Naive thymus-derived CD4-positive, alpha-beta T cell (primary cell): ENCODE measurements at regions of chr7 and their contacts with region 1.

Region 1: DNA sequence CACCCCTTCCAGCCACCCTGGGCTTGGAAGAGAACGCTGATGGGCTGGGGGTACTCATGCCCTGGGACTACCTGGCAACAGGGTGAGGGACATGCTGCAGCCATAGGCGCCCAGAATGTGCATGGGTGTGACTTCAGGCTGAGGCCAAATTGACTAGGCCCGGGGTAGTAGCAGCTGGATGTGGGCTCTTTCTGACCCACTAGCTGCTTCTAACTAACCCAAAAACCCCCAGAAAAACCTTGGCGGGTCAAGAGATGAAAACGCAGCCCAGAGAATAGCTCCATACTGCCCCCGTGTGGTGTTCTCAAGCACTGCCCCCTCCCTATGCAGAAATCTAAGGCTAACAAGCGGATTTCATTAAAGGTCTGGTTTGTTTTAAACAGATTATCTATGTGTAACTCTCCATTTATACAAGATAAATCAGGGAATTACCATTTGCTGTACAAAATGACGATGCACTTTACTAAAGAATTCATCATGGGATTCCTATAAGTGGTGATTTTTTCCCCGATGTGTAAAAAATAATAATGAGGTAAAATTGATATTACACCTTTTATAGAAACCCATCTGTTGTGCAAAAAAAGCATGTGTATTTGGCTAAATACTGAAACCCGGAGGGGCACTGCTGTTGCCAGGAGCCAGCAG is 4.2 kb downstream of the SMARCD3 start:
- DNase-seq: peak in 6 of 9 donors; percentile 44 to 63 (median 54)
- ATAC-seq: peak; percentile 52
- H3K4me3 ChIP-seq: peak overlapping the region; percentile 40
- H3K4me3 Mint-ChIP-seq: peak overlapping the region; percentile 71 to 93 (median 78)
- H3K27ac ChIP-seq: no peak overlapping the region
- H3K27ac Mint-ChIP-seq: peak overlapping the region in 6 of 9 donors; percentile 9 to 90 (median 68)
- H3K4me1 ChIP-seq: peaks cover 22 to 36% of the 10 kb centered on the region in 2 donors
- H3K4me1 Mint-ChIP-seq: peaks cover 27 to 53% (median 38%) of the 10 kb centered on the region in 7 donors
- H3K27me3 ChIP-seq: peaks cover 0 to under 1% of the 10 kb centered on the region in 2 donors
- H3K27me3 Mint-ChIP-seq: peaks cover 3 to 37% (median 21%) of the 10 kb centered on the region in 5 donors

Region 2: DNA sequence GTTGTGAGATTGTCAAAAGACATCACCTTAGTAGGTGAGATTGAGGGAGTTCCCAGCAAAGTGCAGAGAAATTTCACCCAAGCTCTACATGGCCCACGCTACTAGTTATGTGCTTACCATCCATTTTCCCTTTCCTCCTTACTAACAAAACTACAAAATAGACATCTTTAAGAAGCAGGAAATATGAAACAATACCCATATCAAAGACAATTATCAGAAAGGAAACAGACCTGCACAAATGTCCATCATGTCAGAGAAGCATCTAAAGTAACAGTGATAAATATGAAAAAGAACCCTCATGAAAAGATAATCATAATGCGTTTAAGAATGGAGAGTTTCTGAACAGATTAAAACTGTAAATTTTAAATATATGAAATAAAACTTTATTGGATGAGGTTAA is 649.0 kb before region 1 on chr7:
- CTCF ChIA-PET with region 1: no interaction called
- POLR2A ChIA-PET with region 1: no interaction called
- intact Hi-C with region 1: no loop called
- DNase-seq: no peak
- ATAC-seq: no peak
- H3K4me3 ChIP-seq: no peak overlapping the region
- H3K4me3 Mint-ChIP-seq: peak overlapping the region in 8 of 10 donors; percentile 2 to 56 (median 29)
- H3K27ac ChIP-seq: no peak overlapping the region
- H3K27ac Mint-ChIP-seq: peak overlapping the region in 7 of 9 donors; percentile 8 to 82 (median 49)
- H3K4me1 ChIP-seq: peaks cover 7 to 18% of the 10 kb centered on the region in 2 donors
- H3K4me1 Mint-ChIP-seq: peaks cover 33 to 87% (median 79%) of the 10 kb centered on the region in 7 donors
- H3K27me3 ChIP-seq: no peaks in the 10 kb centered on the region
- H3K27me3 Mint-ChIP-seq: no peaks in the 10 kb centered on the region

Region 3: DNA sequence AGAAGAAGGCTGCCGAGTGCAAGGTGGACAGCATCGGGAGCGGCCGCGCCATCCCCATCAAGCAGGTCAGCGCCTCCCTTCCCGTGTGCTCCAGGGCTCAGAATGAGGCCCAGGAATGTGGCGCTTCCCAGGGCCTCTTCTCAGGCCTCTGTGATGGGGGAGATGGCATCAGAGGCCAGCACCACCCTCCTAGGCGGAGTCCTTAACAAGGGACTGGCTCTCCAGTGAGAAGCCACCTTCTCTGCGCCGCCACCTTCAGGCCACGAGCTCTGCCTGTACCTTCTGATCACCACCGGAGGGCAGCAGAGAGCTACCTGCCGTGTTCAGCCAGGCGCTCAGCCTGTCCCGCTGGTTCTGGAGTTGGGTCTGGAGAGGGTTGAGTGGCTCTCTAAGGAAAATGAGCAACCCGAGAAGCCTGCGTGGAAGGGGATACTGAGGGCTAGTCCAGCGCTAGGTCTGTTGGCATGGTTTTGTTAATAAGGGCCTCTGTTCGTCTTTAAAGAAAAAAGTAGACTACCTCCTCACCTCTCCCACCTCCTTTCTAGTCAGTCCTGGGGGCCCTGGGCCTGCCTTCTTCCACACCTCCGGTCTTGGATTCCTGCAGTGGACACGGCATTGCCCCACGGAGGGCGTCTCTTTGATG is 120.4 kb before region 1 on chr7:
- CTCF ChIA-PET with region 1: interaction called, 4 read pairs
- POLR2A ChIA-PET with region 1: no interaction called
- intact Hi-C with region 1: loop called (anchors 1 kb)
- DNase-seq: peak; percentile 61 to 86 (median 77)
- ATAC-seq: peak; percentile 92
- H3K4me3 ChIP-seq: no peak overlapping the region
- H3K4me3 Mint-ChIP-seq: no peak overlapping the region
- H3K27ac ChIP-seq: no peak overlapping the region
- H3K27ac Mint-ChIP-seq: no peak overlapping the region
- H3K4me1 ChIP-seq: no peaks in the 10 kb centered on the region
- H3K4me1 Mint-ChIP-seq: peaks cover 0 to 15% (median 6%) of the 10 kb centered on the region in 7 donors
- H3K27me3 ChIP-seq: no peaks in the 10 kb centered on the region
- H3K27me3 Mint-ChIP-seq: no peaks in the 10 kb centered on the region

Region 4: GRCh38 chr7:151206914-151207313 is 37.4 kb before region 1 on chr7:
- CTCF ChIA-PET with region 1: interaction called, 5 read pairs
- POLR2A ChIA-PET with region 1: interaction called, 8 read pairs
- intact Hi-C with region 1: loop called in 1 of 2 experiments (anchors 1 kb)
- DNase-seq: peak in 5 of 9 donors; percentile 16 to 35 (median 26)
- ATAC-seq: peak; percentile 81
- H3K4me3 ChIP-seq: no peak overlapping the region
- H3K4me3 Mint-ChIP-seq: peak overlapping the region in 9 of 10 donors; percentile 57 to 76 (median 63)
- H3K27ac ChIP-seq: peak overlapping the region; percentile 25
- H3K27ac Mint-ChIP-seq: peak overlapping the region in 8 of 9 donors; percentile 4 to 82 (median 59)
- H3K4me1 ChIP-seq: peaks cover 15 to 20% of the 10 kb centered on the region in 2 donors
- H3K4me1 Mint-ChIP-seq: peaks cover 16 to 28% (median 22%) of the 10 kb centered on the region in 7 donors
- H3K27me3 ChIP-seq: no peaks in the 10 kb centered on the region
- H3K27me3 Mint-ChIP-seq: peaks cover 0 to 21% (median 0%) of the 10 kb centered on the region in 5 donors

Region 5: GRCh38 chr7:151256410-151257045 is 12.2 kb after region 1 on chr7:
- CTCF ChIA-PET with region 1: interaction called, 10 read pairs
- POLR2A ChIA-PET with region 1: no interaction called
- intact Hi-C with region 1: no loop called
- DNase-seq: no peak
- ATAC-seq: no peak
- H3K4me3 ChIP-seq: no peak overlapping the region
- H3K4me3 Mint-ChIP-seq: no peak overlapping the region
- H3K27ac ChIP-seq: no peak overlapping the region
- H3K27ac Mint-ChIP-seq: no peak overlapping the region
- H3K4me1 ChIP-seq: peaks cover 0 to 5% of the 10 kb centered on the region in 2 donors
- H3K4me1 Mint-ChIP-seq: peaks cover 0 to 11% (median 9%) of the 10 kb centered on the region in 7 donors
- H3K27me3 ChIP-seq: no peaks in the 10 kb centered on the region
- H3K27me3 Mint-ChIP-seq: peaks cover 25 to 61% (median 50%) of the 10 kb centered on the region in 5 donors

Region 6: DNA sequence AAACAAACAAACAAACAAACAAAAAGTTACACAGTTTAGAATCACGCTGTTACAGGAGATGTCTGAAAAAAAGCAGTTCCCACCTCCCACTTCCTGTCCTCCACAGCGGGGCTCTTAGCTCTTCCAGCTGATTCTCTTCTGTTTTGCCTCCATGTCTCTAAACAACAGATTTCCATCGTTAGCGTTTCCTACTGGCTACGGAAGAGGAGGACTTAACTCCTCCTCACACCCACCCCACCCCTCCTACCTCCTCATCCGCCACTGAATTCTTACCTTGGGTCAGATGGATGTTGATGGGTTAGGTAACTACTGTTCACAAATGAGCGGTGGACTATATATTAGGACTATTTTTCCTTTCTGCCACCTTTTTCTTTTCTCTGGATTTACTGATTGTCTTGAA is 60.5 kb after region 1 on chr7:
- CTCF ChIA-PET with region 1: interaction called, 3 read pairs
- POLR2A ChIA-PET with region 1: no interaction called
- intact Hi-C with region 1: loop called (anchors 1 kb)
- DNase-seq: no peak
- ATAC-seq: no peak
- H3K4me3 ChIP-seq: no peak overlapping the region
- H3K4me3 Mint-ChIP-seq: peak overlapping the region; percentile 6 to 78 (median 63)
- H3K27ac ChIP-seq: no peak overlapping the region
- H3K27ac Mint-ChIP-seq: no peak overlapping the region
- H3K4me1 ChIP-seq: peaks cover 3 to 6% of the 10 kb centered on the region in 2 donors
- H3K4me1 Mint-ChIP-seq: peaks cover 0 to 21% (median 12%) of the 10 kb centered on the region in 7 donors
- H3K27me3 ChIP-seq: no peaks in the 10 kb centered on the region
- H3K27me3 Mint-ChIP-seq: peaks cover 19 to 46% (median 28%) of the 10 kb centered on the region in 5 donors